ENCODE measurements at regions of chr17 and their contacts with region 1.

Region 1: DNA sequence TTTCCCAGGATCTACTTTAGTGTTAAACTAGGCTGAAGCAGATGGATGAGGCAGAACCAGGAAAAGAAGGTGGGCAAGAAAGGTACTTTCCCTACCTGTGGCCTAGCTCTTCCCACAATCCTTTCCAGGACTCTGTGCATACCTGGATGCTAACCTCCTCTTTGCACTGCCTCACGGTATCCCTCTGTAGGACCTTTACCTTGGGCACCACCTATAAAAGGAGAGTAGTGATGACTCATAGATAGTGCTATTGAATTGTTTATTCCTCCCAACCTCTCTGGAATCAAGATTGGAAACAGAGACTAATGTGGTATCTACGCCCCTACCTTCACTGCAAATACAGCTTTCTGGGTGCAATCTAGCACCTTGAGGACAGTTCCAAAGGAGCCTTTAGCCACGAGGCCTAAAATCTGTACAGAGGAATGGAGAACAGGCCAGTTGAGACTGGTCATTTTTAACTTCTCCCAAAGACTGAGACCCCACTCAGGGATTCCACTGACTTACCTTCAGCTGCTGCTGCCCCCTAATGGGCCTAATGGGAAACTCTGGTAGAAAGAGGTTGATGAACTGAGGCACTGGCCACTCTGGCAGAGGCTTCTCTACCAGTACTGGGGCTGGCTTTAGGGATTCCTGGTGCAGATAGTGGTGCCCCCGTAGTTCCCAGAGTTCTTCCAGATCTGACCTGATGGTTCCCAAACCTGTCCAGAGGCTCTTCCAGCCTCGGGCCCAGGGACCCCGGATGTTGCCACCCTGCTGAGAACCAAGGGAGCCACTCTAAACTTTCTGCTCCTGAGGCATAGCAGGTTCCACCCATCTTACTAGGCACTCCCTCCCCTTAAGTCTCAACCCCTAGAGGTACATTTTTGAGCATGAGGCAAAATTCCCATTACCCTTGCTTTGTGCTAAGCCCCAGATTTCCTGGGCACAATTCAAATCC is 781 bp downstream of the RSKR start:
- DNase-seq: peak in 1 of 2 donors; percentile 26
- H3K4me3 ChIP-seq: no peak overlapping the region
- H3K27ac ChIP-seq: no peak overlapping the region
- H3K4me1 ChIP-seq: no peaks in the 10 kb centered on the region
- H3K27me3 ChIP-seq: no peaks in the 10 kb centered on the region
- CTCF ChIP-seq: peak; percentile 41 to 58 (median 52)
- POLR2A ChIP-seq: no peak

Region 2: DNA sequence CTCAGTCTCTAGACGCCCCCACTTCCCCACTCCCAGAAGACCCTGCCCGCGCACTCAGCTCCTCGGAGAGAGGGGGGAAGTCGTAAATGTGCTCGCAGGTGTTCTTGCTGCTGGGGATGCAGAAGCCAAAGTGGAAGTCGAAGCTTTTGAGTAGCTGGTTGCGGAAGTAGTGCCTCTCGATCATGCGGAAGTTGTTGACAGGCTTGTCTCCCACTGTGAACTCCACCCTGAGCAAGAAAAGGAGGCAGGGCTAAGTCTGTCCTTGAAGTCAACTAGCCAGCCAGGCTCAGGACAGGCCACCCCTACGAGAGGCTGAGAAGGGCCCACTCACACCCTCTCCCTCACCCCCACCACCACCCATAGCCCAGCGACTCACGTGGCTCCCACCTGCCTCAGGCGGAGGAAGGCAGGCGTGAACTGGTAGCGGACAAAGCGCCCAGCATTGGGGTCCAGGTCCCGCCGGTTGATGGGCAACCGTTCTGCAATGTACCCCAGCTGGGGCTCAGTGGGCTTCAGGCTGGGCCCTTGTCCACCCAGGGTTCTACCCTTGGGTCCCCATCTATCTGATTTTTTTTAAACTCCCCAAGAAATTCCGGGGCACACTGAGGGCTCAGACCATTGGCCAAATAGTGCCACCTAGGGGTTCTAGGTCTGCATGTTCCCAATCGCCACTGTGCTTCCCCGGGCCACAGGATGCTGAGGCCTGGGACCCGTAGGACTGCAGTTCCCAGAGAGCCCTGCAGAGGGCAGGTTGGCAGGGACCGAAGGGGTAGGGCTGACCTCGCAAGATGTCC is 65.4 kb before region 1 on chr17:
- intact Hi-C with region 1: loop called (anchors 10 kb)
- DNase-seq: peak; percentile 46 to 64
- H3K4me3 ChIP-seq: no peak overlapping the region
- H3K27ac ChIP-seq: no peak overlapping the region
- H3K4me1 ChIP-seq: peaks cover 0 to 4% of the 10 kb centered on the region in 2 donors
- H3K27me3 ChIP-seq: no peaks in the 10 kb centered on the region
- CTCF ChIP-seq: peak; percentile 50 to 77 (median 68)
- POLR2A ChIP-seq: no peak

Region 3: GRCh38 chr17:28644985-28645939 is 32.1 kb after region 1 on chr17 and contains the start of gene BLTP2:
- intact Hi-C with region 1: no loop called
- DNase-seq: peak; percentile 95 to 96
- H3K4me3 ChIP-seq: peak within 1 kb of the TSS; percentile 99
- H3K27ac ChIP-seq: peak within 1 kb of the TSS; percentile 90 to 98
- H3K4me1 ChIP-seq: peaks cover 3 to 10% of the 10 kb centered on the region in 2 donors
- H3K27me3 ChIP-seq: no peaks in the 10 kb centered on the region
- CTCF ChIP-seq: peak; percentile 9 to 51 (median 26)
- POLR2A ChIP-seq: peak in 1 of 2 donors; percentile 85
- total RNA-seq, gene BLTP2: 35.0 to 126 (median 68.5) TPM

Region 4: GRCh38 chr17:28667870-28668269 is 54.7 kb after region 1 on chr17:
- intact Hi-C with region 1: no loop called
- DNase-seq: no peak
- H3K4me3 ChIP-seq: no peak overlapping the region
- H3K27ac ChIP-seq: no peak overlapping the region
- H3K4me1 ChIP-seq: peaks cover 0 to 10% of the 10 kb centered on the region in 2 donors
- H3K27me3 ChIP-seq: no peaks in the 10 kb centered on the region
- CTCF ChIP-seq: no peak
- POLR2A ChIP-seq: no peak

Measured in uterus (tissue), 4 donors.